Activated naive CD4-positive, alpha-beta T cell treated with anti-CD3 and anti-CD28 coated beads, Interleukin-2, amount 10 ng/mL, durations not matched to agents 7 days and 5 days (primary cell): ENCODE measurements at regions of chr10 and their contacts with region 1.

Region 1: GRCh38 chr10:32266979-32267378 is 80.0 kb downstream of the EPC1 start:
- DNase-seq: no peak
- H3K4me3 Mint-ChIP-seq: no peak overlapping the region
- H3K27ac Mint-ChIP-seq: no peak overlapping the region
- H3K4me1 Mint-ChIP-seq: peaks cover 6% of the 10 kb centered on the region
- H3K27me3 Mint-ChIP-seq: no peaks in the 10 kb centered on the region

Region 2: GRCh38 chr10:32256613-32257437 is 10.2 kb before region 1 on chr10:
- CTCF ChIA-PET with region 1: interaction called, 22 read pairs
- DNase-seq: peak; percentile 77
- H3K4me3 Mint-ChIP-seq: no peak overlapping the region
- H3K27ac Mint-ChIP-seq: no peak overlapping the region
- H3K4me1 Mint-ChIP-seq: peaks cover 14% of the 10 kb centered on the region
- H3K27me3 Mint-ChIP-seq: peaks cover 3% of the 10 kb centered on the region